Activated T-helper 2 cell treated with anti-CD3 and anti-CD28 coated beads, Interferon-gamma antibody, Interleukin-2, Interleukin-4, amounts not matched to agents 10 μg/mL and 5 μg/mL and 100 μg/mL, durations not matched to agents 14 hours and 24 hours and 36 hours (primary cell): ENCODE measurements at regions of chr6 and their contacts with region 1.

Region 1: DNA sequence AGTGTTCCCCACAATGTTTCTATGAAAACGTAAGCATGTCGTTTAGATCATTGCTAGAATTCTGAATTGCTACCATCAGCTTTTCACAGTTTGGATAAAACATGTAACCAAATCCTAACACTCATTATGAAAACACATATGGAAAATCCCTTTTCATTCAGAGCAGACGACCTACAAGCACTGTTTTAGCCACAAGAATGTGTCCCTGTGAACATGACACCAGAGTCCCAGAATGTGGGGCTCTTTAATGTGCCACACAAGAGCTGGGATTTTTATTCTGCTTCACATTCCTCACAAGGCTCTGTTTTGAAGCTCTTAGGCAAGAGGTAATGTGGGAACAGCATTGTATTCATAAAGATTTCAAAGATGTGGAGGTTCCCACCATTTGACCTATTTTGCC is 141.1 kb upstream of the CITED2 start:
- DNase-seq: no peak
- H3K4me3 Mint-ChIP-seq: no peak overlapping the region
- H3K27ac Mint-ChIP-seq: no peak overlapping the region
- H3K4me1 Mint-ChIP-seq: peaks cover 13% of the 10 kb centered on the region
- H3K27me3 Mint-ChIP-seq: peaks cover 6% of the 10 kb centered on the region

Region 2: GRCh38 chr6:139271056-139271455 is 244.5 kb before region 1 on chr6:
- intact Hi-C with region 1: no loop called
- DNase-seq: no peak
- H3K4me3 Mint-ChIP-seq: no peak overlapping the region
- H3K27ac Mint-ChIP-seq: no peak overlapping the region
- H3K4me1 Mint-ChIP-seq: peaks cover 4% of the 10 kb centered on the region
- H3K27me3 Mint-ChIP-seq: no peaks in the 10 kb centered on the region

Region 3: GRCh38 chr6:139764498-139764986 is 249.0 kb after region 1 on chr6:
- intact Hi-C with region 1: loop called (anchors 5 kb)
- DNase-seq: no peak
- H3K4me3 Mint-ChIP-seq: no peak overlapping the region
- H3K27ac Mint-ChIP-seq: peak overlapping the region; percentile 56
- H3K4me1 Mint-ChIP-seq: peaks cover 31% of the 10 kb centered on the region
- H3K27me3 Mint-ChIP-seq: no peaks in the 10 kb centered on the region